ENCODE measurements at regions of chr7 and their contacts with region 1.

Region 1: GRCh38 chr7:152667958-152668357 is 8.0 kb downstream of the XRCC2 start:
- DNase-seq: no peak
- H3K4me3 ChIP-seq: no peak overlapping the region
- H3K27ac ChIP-seq: no peak overlapping the region
- H3K4me1 ChIP-seq: peaks cover 13% of the 10 kb centered on the region
- H3K27me3 ChIP-seq: no peaks in the 10 kb centered on the region
- CTCF ChIP-seq: no peak
- POLR2A ChIP-seq: no peak

Region 2: GRCh38 chr7:152292898-152293297 is 375.1 kb before region 1 on chr7:
- CTCF ChIA-PET with region 1: no interaction called
- POLR2A ChIA-PET with region 1: no interaction called
- dilution Hi-C with region 1: no loop called
- intact Hi-C with region 1: no loop called
- DNase-seq: no peak
- H3K4me3 ChIP-seq: no peak overlapping the region
- H3K27ac ChIP-seq: no peak overlapping the region
- H3K4me1 ChIP-seq: no peaks in the 10 kb centered on the region
- H3K27me3 ChIP-seq: no peaks in the 10 kb centered on the region
- CTCF ChIP-seq: no peak
- POLR2A ChIP-seq: no peak

Region 3: GRCh38 chr7:152402384-152403250 is 265.3 kb before region 1 on chr7:
- CTCF ChIA-PET with region 1: no interaction called
- POLR2A ChIA-PET with region 1: interaction called, 12 read pairs
- dilution Hi-C with region 1: no loop called
- intact Hi-C with region 1: no loop called
- DNase-seq: peak; percentile 38
- H3K4me3 ChIP-seq: no peak overlapping the region
- H3K27ac ChIP-seq: no peak overlapping the region
- H3K4me1 ChIP-seq: peaks cover 6% of the 10 kb centered on the region
- H3K27me3 ChIP-seq: no peaks in the 10 kb centered on the region
- CTCF ChIP-seq: no peak
- POLR2A ChIP-seq: no peak

Region 4: DNA sequence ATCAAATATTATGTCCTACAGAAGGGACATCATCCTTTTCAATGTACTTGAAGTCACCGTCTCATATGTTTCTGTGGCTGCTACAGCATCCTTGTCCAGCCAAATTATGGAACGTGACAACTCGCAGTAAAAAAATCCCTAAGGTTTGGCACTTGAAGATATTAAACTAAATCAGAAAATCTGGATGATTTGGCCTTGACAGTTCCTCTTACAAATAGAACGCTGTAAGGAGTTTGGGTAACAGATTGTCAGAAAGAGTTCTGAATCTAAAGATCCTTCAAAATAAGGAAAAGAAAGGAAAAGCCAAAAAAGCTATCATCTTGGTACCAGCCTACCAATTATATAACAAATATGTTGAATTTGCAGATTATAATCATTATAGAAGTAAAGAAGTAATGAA is 13.0 kb before region 1 on chr7:
- CTCF ChIA-PET with region 1: no interaction called
- POLR2A ChIA-PET with region 1: no interaction called
- dilution Hi-C with region 1: no loop called
- intact Hi-C with region 1: no loop called
- DNase-seq: no peak
- H3K4me3 ChIP-seq: no peak overlapping the region
- H3K27ac ChIP-seq: no peak overlapping the region
- H3K4me1 ChIP-seq: no peaks in the 10 kb centered on the region
- H3K27me3 ChIP-seq: no peaks in the 10 kb centered on the region
- CTCF ChIP-seq: no peak
- POLR2A ChIP-seq: no peak

Region 5: GRCh38 chr7:152751449-152752141 is 83.6 kb after region 1 on chr7:
- CTCF ChIA-PET with region 1: no interaction called
- POLR2A ChIA-PET with region 1: no interaction called
- dilution Hi-C with region 1: no loop called
- intact Hi-C with region 1: no loop called
- DNase-seq: no peak
- H3K4me3 ChIP-seq: no peak overlapping the region
- H3K27ac ChIP-seq: no peak overlapping the region
- H3K4me1 ChIP-seq: no peaks in the 10 kb centered on the region
- H3K27me3 ChIP-seq: peaks cover 3 to 7% of the 10 kb centered on the region in 2 experiments
- CTCF ChIP-seq: no peak
- POLR2A ChIP-seq: no peak